A673 (cell line): ENCODE measurements at regions of chr19 and their contacts with region 1.

Region 1: DNA sequence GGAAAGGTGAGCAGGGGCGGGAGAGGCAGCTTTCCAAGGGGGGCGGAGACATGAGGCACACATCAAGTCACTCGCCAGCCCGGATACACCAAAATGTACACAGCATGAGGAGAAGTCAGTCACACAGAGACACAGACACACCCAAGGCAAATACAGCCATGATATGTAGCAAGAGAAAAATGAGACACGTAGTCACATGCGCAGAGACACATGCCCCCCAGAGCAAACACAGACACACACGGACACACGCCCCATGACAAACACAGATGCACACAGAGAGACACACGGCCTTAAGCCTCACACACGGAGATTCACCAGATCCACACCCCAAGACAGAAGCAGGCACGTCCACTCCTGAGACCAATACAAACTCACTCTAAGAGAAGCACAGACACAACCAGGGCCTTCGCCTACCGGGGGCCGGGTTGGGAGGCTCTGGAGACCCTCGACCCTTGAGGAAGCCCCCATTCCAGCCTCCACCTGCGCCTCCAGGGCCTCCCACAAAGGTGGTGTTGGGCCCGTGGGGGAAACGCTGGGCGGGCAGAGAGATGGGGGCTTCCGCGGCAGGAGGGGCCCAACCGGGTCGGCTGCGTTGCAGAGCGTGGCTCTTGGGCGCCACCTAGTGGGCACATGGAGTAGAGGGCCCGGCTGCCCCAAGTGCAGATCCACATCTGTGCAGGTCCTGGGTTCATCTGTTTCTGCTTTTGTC is 10.2 kb upstream of the TINCR start:
- DNase-seq: peak; percentile 79
- H3K4me3 ChIP-seq: no peak overlapping the region
- H3K27ac ChIP-seq: peak overlapping the region; percentile 29
- H3K4me1 ChIP-seq: peaks cover 9% of the 10 kb centered on the region
- H3K27me3 ChIP-seq: no peaks in the 10 kb centered on the region
- CTCF ChIP-seq: peak; percentile 98

Region 2: GRCh38 chr19:5038631-5039271 is 539.2 kb before region 1 on chr19:
- CTCF ChIA-PET with region 1: no interaction called
- POLR2A ChIA-PET with region 1: no interaction called
- intact Hi-C with region 1: loop called (anchors 5 kb)
- DNase-seq: peak; percentile 73
- H3K4me3 ChIP-seq: no peak overlapping the region
- H3K27ac ChIP-seq: peak overlapping the region; percentile 43
- H3K4me1 ChIP-seq: peaks cover 39% of the 10 kb centered on the region
- H3K27me3 ChIP-seq: no peaks in the 10 kb centered on the region
- CTCF ChIP-seq: peak; percentile 70

Region 3: DNA sequence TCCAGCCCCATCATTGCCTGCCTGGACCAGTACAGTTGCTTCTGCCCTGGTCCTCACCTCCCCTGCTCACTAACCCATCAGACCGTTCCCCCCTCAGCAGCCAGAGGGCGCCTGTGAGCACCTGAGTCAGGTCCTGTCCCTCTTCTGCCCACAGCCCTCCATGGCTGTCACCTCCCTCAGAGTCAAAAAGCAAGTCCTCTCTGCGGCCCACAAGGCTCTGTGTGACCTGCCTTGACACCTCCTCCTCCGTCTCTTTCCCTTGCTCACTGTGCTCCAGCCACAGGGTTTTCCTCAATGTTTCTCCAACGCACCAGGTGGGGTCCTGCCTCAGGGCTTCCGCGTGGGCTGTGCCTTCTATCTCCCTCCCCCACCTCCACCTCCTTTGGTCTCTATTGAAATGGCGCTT is 208.0 kb before region 1 on chr19:
- CTCF ChIA-PET with region 1: no interaction called
- POLR2A ChIA-PET with region 1: no interaction called
- intact Hi-C with region 1: loop called (anchors 10 kb)
- DNase-seq: peak; percentile 61
- H3K4me3 ChIP-seq: no peak overlapping the region
- H3K27ac ChIP-seq: no peak overlapping the region
- H3K4me1 ChIP-seq: no peaks in the 10 kb centered on the region
- H3K27me3 ChIP-seq: no peaks in the 10 kb centered on the region
- CTCF ChIP-seq: peak; percentile 81

Region 4: GRCh38 chr19:5547881-5548280 is 30.1 kb before region 1 on chr19:
- CTCF ChIA-PET with region 1: no interaction called
- POLR2A ChIA-PET with region 1: no interaction called
- intact Hi-C with region 1: loop called (anchors 1 kb)
- DNase-seq: peak; percentile 77
- H3K4me3 ChIP-seq: no peak overlapping the region
- H3K27ac ChIP-seq: no peak overlapping the region
- H3K4me1 ChIP-seq: no peaks in the 10 kb centered on the region
- H3K27me3 ChIP-seq: no peaks in the 10 kb centered on the region
- CTCF ChIP-seq: peak; percentile 83